ENCODE measurements at regions of chr5 and their contacts with region 1.

Region 1: DNA sequence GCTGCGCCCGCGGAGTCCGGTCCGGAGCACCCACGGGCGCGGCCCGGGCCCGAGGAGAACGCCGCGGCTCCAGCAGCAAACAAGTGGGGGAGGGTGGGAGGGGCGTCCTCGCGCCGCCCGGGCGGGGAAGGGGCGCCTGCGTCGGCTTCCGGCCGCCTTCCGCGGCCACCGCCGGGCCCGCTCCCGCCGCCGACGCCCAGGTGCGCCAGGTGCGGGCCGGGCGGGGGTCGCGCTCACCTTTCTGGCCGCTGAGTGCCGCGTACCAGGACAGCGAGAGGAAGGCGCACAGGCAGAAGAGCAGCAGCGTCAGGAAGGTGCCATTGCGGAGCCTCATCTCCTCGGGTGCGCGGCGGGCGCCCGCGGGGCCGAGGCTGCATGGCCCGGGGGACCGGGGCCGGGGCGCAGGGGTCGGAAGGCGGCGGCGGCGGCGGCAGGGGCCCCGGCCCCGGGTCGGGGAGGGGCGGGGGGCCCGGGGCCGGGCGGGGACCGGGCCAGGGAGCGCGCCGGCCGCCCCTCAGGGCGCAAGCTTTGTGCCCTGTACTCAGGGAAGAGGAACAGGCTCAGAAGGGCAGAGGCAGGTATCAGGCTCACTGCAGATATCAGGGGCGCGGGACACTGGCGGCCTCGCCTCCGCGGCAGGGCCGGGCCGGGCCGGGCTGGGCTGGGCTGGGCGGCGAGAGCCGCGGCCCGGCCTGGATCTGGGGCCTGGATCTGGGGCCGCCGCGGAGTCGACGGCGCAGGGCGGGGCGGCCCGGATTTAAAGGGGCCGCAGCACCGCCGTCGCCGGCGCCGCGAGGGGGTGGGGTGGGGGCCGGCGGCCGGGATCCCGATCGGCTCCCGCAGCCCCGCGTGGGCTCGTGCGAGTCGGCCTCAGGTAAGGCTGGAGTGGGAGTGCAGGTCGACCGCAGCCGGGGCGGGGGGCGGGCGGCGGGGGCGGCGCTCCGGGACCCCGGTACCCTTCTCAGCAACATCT is at the start of gene MGAT4B:
- DNase-seq: peak in 13 of 14 experiments; percentile 39 to 82 (median 62)
- ATAC-seq: peak; percentile 72
- H3K4me3 ChIP-seq: peak within 1 kb of the TSS; percentile 60
- H3K4me3 Mint-ChIP-seq: peak within 1 kb of the TSS; percentile 76
- H3K27ac ChIP-seq: peak within 1 kb of the TSS; percentile 48 to 67
- H3K27ac Mint-ChIP-seq: no peak within 1 kb of the TSS
- H3K4me1 ChIP-seq: peaks cover 54% of the 10 kb centered on the region
- H3K4me1 Mint-ChIP-seq: peaks cover 33% of the 10 kb centered on the region
- H3K27me3 ChIP-seq: no peaks in the 10 kb centered on the region
- H3K27me3 Mint-ChIP-seq: no peaks in the 10 kb centered on the region
- CTCF ChIP-seq: no peak
- total RNA-seq, gene MGAT4B: 141 to 145 TPM

Region 2: GRCh38 chr5:179599975-179600391 is 206.6 kb before region 1 on chr5:
- CTCF ChIA-PET with region 1: no interaction called
- POLR2A ChIA-PET with region 1: no interaction called
- intact Hi-C with region 1: no loop called
- DNase-seq: peak in 1 of 14 experiments; percentile 22
- ATAC-seq: no peak
- H3K4me3 ChIP-seq: no peak overlapping the region
- H3K4me3 Mint-ChIP-seq: no peak overlapping the region
- H3K27ac ChIP-seq: no peak overlapping the region
- H3K27ac Mint-ChIP-seq: no peak overlapping the region
- H3K4me1 ChIP-seq: no peaks in the 10 kb centered on the region
- H3K4me1 Mint-ChIP-seq: no peaks in the 10 kb centered on the region
- H3K27me3 ChIP-seq: no peaks in the 10 kb centered on the region
- H3K27me3 Mint-ChIP-seq: no peaks in the 10 kb centered on the region
- CTCF ChIP-seq: no peak

Region 3: GRCh38 chr5:179678223-179679013 is 128.1 kb before region 1 on chr5:
- CTCF ChIA-PET with region 1: no interaction called
- POLR2A ChIA-PET with region 1: no interaction called
- intact Hi-C with region 1: loop called in 1 of 2 experiments (anchors 5 kb)
- DNase-seq: peak; percentile 83 to 98 (median 92)
- ATAC-seq: peak; percentile 86
- H3K4me3 ChIP-seq: peak overlapping the region; percentile 99
- H3K4me3 Mint-ChIP-seq: peak overlapping the region; percentile 97
- H3K27ac ChIP-seq: peak overlapping the region; percentile 83 to 85
- H3K27ac Mint-ChIP-seq: peak overlapping the region; percentile 98
- H3K4me1 ChIP-seq: peaks cover 36% of the 10 kb centered on the region
- H3K4me1 Mint-ChIP-seq: peaks cover 35% of the 10 kb centered on the region
- H3K27me3 ChIP-seq: no peaks in the 10 kb centered on the region
- H3K27me3 Mint-ChIP-seq: no peaks in the 10 kb centered on the region
- CTCF ChIP-seq: no peak

Region 4: GRCh38 chr5:179795863-179796833 is 10.4 kb before region 1 on chr5:
- CTCF ChIA-PET with region 1: interaction called, 4 read pairs
- POLR2A ChIA-PET with region 1: interaction called, 23 read pairs
- intact Hi-C with region 1: no loop called
- DNase-seq: peak; percentile 53 to 89 (median 69)
- ATAC-seq: peak; percentile 70
- H3K4me3 ChIP-seq: peak overlapping the region; percentile 43
- H3K4me3 Mint-ChIP-seq: peak overlapping the region; percentile 83
- H3K27ac ChIP-seq: peak overlapping the region in 1 of 2 donors; percentile 13
- H3K27ac Mint-ChIP-seq: peak overlapping the region; percentile 44
- H3K4me1 ChIP-seq: peaks cover 38% of the 10 kb centered on the region
- H3K4me1 Mint-ChIP-seq: peaks cover 40% of the 10 kb centered on the region
- H3K27me3 ChIP-seq: no peaks in the 10 kb centered on the region
- H3K27me3 Mint-ChIP-seq: no peaks in the 10 kb centered on the region
- CTCF ChIP-seq: peak; percentile 74

Region 5: GRCh38 chr5:179858586-179859427 is 52.3 kb after region 1 on chr5 and contains the start of gene MRNIP:
- CTCF ChIA-PET with region 1: interaction called, 4 read pairs
- POLR2A ChIA-PET with region 1: interaction called, 4 read pairs
- intact Hi-C with region 1: loop called (anchors 1 to 10 kb)
- DNase-seq: peak; percentile 80 to 94 (median 88)
- ATAC-seq: peak; percentile 96
- H3K4me3 ChIP-seq: peak within 1 kb of the TSS; percentile 74
- H3K4me3 Mint-ChIP-seq: peak within 1 kb of the TSS; percentile 96
- H3K27ac ChIP-seq: peak within 1 kb of the TSS; percentile 34 to 61
- H3K27ac Mint-ChIP-seq: peak within 1 kb of the TSS; percentile 94
- H3K4me1 ChIP-seq: peaks cover 22% of the 10 kb centered on the region
- H3K4me1 Mint-ChIP-seq: peaks cover 17% of the 10 kb centered on the region
- H3K27me3 ChIP-seq: no peaks in the 10 kb centered on the region
- H3K27me3 Mint-ChIP-seq: no peaks in the 10 kb centered on the region
- CTCF ChIP-seq: no peak
- total RNA-seq, gene MRNIP: 31.8 to 32.8 TPM

Region 6: DNA sequence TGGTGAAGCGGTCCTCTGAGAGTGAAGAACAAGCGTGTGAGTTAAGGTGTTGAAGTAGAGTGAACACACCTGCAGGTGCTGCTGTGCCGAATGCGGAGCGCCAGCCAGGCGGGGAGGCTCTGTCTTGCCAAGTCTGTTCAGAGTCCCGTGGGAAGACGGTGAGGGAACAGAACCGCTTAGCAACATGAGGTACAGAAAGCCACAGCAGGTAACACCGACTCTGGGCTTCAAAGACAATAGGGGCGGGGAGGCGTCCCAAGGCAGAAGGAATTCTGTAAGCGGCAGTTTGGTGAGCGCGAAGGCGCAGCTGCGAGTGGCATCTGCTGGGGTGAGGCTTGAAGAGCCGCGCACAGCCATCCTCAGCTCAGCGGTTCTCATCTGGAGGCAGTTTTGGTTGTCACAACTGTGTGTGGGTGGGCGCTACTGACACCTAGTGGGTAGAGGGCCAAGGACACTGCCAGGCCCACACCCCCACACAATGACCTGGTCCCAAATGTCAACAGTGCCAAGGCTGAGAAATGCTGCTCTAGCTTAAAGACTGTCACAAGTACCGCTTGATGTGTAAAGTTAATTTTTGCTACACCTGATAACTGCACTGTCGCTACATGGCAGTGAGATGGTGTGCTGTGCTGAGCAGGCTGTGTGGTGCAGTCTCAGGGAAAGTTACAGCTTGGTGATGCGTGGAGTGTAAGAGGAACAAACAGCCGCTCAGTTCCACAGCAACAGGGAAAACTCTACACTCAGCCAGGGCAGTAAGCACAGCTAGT is 168.6 kb after region 1 on chr5:
- CTCF ChIA-PET with region 1: no interaction called
- POLR2A ChIA-PET with region 1: no interaction called
- intact Hi-C with region 1: loop called in 1 of 2 experiments (anchors 10 kb)
- DNase-seq: peak in 9 of 14 experiments; percentile 5 to 51 (median 18)
- ATAC-seq: peak; percentile 48
- H3K4me3 ChIP-seq: no peak overlapping the region
- H3K4me3 Mint-ChIP-seq: no peak overlapping the region
- H3K27ac ChIP-seq: no peak overlapping the region
- H3K27ac Mint-ChIP-seq: no peak overlapping the region
- H3K4me1 ChIP-seq: no peaks in the 10 kb centered on the region
- H3K4me1 Mint-ChIP-seq: peaks cover 13% of the 10 kb centered on the region
- H3K27me3 ChIP-seq: no peaks in the 10 kb centered on the region
- H3K27me3 Mint-ChIP-seq: no peaks in the 10 kb centered on the region
- CTCF ChIP-seq: no peak